MCF 10A (cell line): ENCODE measurements at regions of chr20 and their contacts with region 1.

Region 1: DNA sequence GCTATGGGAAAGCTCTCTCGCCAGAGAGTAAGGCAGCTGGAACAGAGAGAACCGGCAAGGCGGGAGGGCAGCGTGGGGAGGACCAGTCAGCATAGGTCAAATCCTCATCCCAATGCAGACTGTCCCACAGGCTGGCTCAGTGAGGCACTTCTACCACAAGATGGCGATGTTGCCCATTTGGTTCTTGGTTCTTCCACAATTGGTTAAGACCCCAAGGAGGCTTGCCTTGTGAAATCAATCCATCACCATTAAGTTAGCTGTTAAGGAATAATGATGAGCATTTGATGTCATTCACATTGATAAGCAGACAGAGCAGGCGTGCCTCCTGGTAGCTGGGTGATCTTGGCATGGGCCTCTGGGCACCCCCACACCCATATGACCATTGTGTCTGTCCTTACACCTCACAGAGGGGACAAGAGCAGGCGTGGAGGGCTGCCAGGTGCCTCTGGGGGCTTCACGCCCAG is 2.4 kb downstream of the CSTL1 start:
- DNase-seq: peak; percentile 85
- H3K4me3 Mint-ChIP-seq: no peak overlapping the region
- H3K27ac Mint-ChIP-seq: no peak overlapping the region
- H3K4me1 Mint-ChIP-seq: peaks cover 25% of the 10 kb centered on the region
- H3K27me3 Mint-ChIP-seq: no peaks in the 10 kb centered on the region
- CTCF ChIP-seq: peak; percentile 86

Region 2: DNA sequence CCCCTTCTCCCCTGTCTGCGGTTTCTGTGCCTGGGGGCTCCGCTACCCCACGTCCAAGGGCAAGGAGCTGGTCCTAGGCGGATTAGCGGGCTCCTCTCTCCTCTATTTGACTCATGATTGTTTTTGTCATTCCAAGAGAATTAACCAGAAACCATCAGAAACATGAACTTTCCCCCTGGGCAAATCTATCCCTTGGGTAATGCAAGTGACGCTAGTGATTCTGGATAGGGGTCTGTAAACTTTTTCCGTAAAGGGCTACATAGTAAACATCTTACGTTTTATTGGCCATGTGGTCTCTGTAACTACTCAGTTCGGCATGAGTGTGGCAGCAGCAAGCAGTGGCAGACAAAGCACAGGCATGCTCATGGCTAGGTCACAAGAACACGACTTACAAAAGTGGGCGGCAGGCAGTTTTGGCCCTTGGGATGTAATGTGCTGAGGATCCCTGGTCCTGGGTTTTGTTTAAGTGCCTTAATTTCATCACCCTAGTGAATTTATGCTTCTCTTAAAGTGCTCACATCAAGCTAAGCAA is 10.1 kb after region 1 on chr20:
- CTCF ChIA-PET with region 1: interaction called, 28 read pairs
- POLR2A ChIA-PET with region 1: no interaction called
- intact Hi-C with region 1: no loop called
- DNase-seq: no peak
- H3K4me3 Mint-ChIP-seq: no peak overlapping the region
- H3K27ac Mint-ChIP-seq: no peak overlapping the region
- H3K4me1 Mint-ChIP-seq: no peaks in the 10 kb centered on the region
- H3K27me3 Mint-ChIP-seq: no peaks in the 10 kb centered on the region
- CTCF ChIP-seq: no peak

Region 3: DNA sequence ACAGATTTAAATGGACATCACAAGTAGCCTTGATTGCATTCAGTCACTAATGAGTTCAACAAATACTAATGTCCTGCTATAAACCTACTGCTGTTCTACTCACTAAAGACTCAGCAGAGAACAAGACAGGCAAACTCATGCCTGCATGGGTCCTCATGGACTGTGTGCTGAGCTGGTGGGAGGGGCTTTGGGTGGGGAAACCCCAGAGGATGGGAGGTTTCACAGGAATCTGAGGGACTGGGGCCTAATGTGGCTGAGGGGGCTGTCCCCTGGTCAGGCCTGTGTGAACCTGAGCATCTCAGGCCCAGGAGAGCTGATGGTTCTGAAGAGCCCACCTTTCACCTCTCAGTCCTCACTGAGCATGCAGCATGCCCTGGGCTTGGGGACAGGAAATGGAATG is 50.4 kb after region 1 on chr20:
- CTCF ChIA-PET with region 1: interaction called, 11 read pairs
- POLR2A ChIA-PET with region 1: no interaction called
- intact Hi-C with region 1: no loop called
- DNase-seq: no peak
- H3K4me3 Mint-ChIP-seq: no peak overlapping the region
- H3K27ac Mint-ChIP-seq: no peak overlapping the region
- H3K4me1 Mint-ChIP-seq: no peaks in the 10 kb centered on the region
- H3K27me3 Mint-ChIP-seq: no peaks in the 10 kb centered on the region
- CTCF ChIP-seq: no peak

Region 4: DNA sequence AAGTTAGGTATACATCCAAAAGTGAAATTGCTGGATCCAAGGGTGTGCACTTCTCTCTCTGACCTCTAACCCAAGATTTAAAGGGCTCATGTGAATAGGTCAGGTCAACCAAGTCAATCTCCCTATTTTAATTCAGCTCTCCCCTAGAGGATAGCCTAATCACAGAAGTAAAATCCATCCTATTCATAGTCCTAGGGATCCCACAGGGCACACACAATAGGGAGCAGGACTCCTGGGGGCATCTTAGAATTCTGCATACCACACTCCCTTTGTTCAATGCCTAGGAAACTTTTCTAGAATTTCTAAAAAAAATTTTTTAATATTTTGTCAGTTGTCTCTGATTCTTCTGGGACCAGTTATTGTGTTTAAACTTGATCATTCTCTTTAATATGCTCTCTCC is 91.3 kb after region 1 on chr20:
- CTCF ChIA-PET with region 1: no interaction called
- POLR2A ChIA-PET with region 1: no interaction called
- intact Hi-C with region 1: no loop called
- DNase-seq: no peak
- H3K4me3 Mint-ChIP-seq: no peak overlapping the region
- H3K27ac Mint-ChIP-seq: no peak overlapping the region
- H3K4me1 Mint-ChIP-seq: peaks cover 6% of the 10 kb centered on the region
- H3K27me3 Mint-ChIP-seq: no peaks in the 10 kb centered on the region
- CTCF ChIP-seq: no peak

Region 5: GRCh38 chr20:23613676-23614075 is 171.8 kb after region 1 on chr20:
- CTCF ChIA-PET with region 1: interaction called, 541 read pairs
- POLR2A ChIA-PET with region 1: interaction called, 5 read pairs
- intact Hi-C with region 1: no loop called
- DNase-seq: no peak
- H3K4me3 Mint-ChIP-seq: no peak overlapping the region
- H3K27ac Mint-ChIP-seq: no peak overlapping the region
- H3K4me1 Mint-ChIP-seq: no peaks in the 10 kb centered on the region
- H3K27me3 Mint-ChIP-seq: no peaks in the 10 kb centered on the region
- CTCF ChIP-seq: no peak

Region 6: GRCh38 chr20:23668477-23668951 is 226.6 kb after region 1 on chr20:
- CTCF ChIA-PET with region 1: interaction called, 27 read pairs
- POLR2A ChIA-PET with region 1: no interaction called
- intact Hi-C with region 1: loop called (anchors 1 kb)
- DNase-seq: peak; percentile 72
- H3K4me3 Mint-ChIP-seq: no peak overlapping the region
- H3K27ac Mint-ChIP-seq: no peak overlapping the region
- H3K4me1 Mint-ChIP-seq: no peaks in the 10 kb centered on the region
- H3K27me3 Mint-ChIP-seq: no peaks in the 10 kb centered on the region
- CTCF ChIP-seq: peak; percentile 93